Cardiac septum (tissue), 1 donor: ENCODE measurements at regions of chrX and their contacts with region 1.

Region 1: DNA sequence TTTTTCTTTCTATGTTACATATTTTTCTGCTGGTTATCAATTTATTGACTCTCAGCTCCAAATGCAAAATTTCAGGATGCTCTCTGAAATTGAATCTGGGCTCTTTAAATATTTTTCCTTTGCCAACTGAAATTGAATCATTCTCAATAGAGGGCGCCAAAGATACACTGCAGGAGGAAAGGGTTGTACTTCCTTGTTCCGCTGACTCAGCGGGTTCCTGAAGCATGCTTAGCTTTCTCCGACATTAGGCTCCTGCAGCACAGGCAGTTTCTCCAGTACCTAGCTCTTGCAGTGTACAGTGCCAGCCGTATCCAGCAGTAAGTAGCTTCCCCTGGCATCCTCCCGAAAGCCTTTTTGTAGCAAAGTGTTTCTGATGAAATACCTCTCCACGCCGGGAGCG is 28.8 kb upstream of the CFAP47 start:
- DNase-seq: no peak

Region 2: DNA sequence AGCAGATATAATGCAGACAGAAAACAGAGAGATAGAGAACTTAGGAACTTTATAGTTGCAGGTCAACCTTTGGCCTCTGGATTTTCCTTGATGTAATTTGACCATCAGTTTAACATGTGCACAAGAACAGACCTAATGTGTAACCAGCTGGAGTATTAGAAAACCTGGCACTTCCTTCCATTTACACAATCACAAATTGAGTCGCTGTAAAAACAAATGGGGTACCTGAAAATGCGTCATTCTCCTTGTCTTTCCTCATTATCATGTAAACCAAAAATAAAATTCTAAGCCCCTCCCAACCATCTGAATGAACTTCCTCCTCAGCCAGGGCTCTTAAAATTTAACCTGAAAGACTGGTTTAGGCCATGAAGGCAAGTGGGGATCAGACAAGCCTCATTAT is 451.0 kb before region 1 on chrX:
- intact Hi-C with region 1: no loop called
- DNase-seq: no peak

Region 3: DNA sequence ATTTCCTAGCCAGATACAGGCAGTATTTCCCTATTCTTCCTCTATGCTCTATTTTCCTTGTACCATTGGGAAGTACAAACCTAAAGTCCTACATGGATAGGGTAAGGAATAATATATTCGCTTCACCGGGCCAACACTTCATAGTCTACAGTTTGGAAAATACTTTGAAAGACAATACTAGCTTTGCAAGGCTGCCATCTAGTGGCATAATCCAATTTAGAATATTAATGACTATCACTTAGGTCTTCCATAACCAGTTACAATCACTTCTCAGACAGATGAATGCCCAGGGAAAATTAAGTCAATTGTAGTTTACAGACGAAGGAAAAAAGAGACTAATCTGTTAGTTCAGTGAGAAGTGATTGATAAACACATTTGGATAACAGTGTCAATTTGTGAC is 976.4 kb after region 1 on chrX:
- intact Hi-C with region 1: loop called (anchors 10 kb)
- DNase-seq: no peak